ENCODE measurements at regions of chr12 and their contacts with region 1.

Region 1: GRCh38 chr12:50504798-50505385 is at the start of gene DIP2B:
- DNase-seq: peak; percentile 96 to 97
- H3K4me3 ChIP-seq: peak within 1 kb of the TSS; percentile 59 to 92 (median 75)
- H3K27ac ChIP-seq: peak within 1 kb of the TSS; percentile 94 to 96 (median 96)
- H3K4me1 ChIP-seq: peaks cover 16 to 39% of the 10 kb centered on the region in 2 donors
- H3K27me3 ChIP-seq: no peaks in the 10 kb centered on the region
- CTCF ChIP-seq: peak; percentile 75 to 99 (median 90)
- POLR2A ChIP-seq: peak in 1 of 2 donors; percentile 92
- total RNA-seq, gene DIP2B: 27.7 to 45.7 (median 32.4) TPM

Region 2: DNA sequence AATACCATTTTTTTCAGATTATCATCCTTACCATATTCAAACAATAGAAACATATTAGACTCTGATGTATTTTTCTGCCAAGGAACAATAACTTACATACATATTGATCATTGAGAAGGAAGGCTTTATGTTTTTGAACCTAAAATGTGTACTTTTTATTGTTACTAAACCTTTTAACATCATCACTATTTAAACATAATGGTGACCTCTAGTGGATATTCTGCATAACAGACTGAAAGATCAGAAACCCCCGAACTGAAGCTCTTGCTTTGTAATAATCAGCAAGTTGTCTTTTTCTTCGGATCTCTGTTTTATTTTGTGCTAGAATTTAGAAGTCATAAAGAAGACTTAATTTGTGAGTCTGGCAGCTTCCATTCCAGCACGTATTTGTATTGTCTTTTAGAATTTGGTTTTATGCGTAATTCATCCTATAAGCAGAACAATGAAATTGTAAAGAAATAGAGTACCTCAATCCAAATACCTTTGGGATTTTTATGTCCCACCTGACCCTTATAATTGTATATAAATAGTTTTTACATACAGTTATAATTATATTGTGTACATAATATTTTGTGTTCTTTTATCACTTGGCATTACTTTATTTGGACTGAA is 133.1 kb after region 1 on chr12:
- intact Hi-C with region 1: loop called (anchors 5 kb)
- DNase-seq: no peak
- H3K4me3 ChIP-seq: no peak overlapping the region
- H3K27ac ChIP-seq: no peak overlapping the region
- H3K4me1 ChIP-seq: peaks cover 11 to 40% of the 10 kb centered on the region in 2 donors
- H3K27me3 ChIP-seq: no peaks in the 10 kb centered on the region
- CTCF ChIP-seq: peak in 5 of 6 experiments; percentile 10 to 70 (median 63)
- POLR2A ChIP-seq: no peak

Measured in thyroid gland (tissue), 4 donors.